K562 (cell line): ENCODE measurements at regions of chr6 and their contacts with region 1.

Region 1: GRCh38 chr6:149941583-149942431 is at the start of gene ULBP2:
- DNase-seq: peak; percentile 92 to 99 (median 99)
- ATAC-seq: peak; percentile 93
- H3K4me3 ChIP-seq: peak within 1 kb of the TSS; percentile 43
- H3K27ac ChIP-seq: no peak within 1 kb of the TSS
- H3K4me1 ChIP-seq: peaks cover 0 to 26% of the 10 kb centered on the region in 2 experiments; a peak in 2 of 5 replicates
- H3K27me3 ChIP-seq: peaks cover 14 to 51% of the 10 kb centered on the region in 2 experiments; a peak in 4 of 5 replicates
- CTCF ChIP-seq: no peak
- EP300 ChIP-seq: no peak
- POLR2A ChIP-seq: no peak
- RAD21 ChIP-seq: no peak
- polyA plus RNA-seq, gene ULBP2: 3.2 to 4.1 TPM

Region 2: GRCh38 chr6:150403458-150404246 is 461.8 kb after region 1 on chr6:
- CTCF ChIA-PET with region 1: no interaction called
- POLR2A ChIA-PET with region 1: no interaction called
- in situ Hi-C with region 1: loop called (anchors 10 kb)
- intact Hi-C with region 1: no loop called
- DNase-seq: no peak
- ATAC-seq: no peak
- H3K4me3 ChIP-seq: no peak overlapping the region
- H3K27ac ChIP-seq: no peak overlapping the region
- H3K4me1 ChIP-seq: peaks cover 0 to 3% of the 10 kb centered on the region in 2 experiments; a peak in 1 of 5 replicates
- H3K27me3 ChIP-seq: peaks cover 22 to 38% of the 10 kb centered on the region in 2 experiments
- CTCF ChIP-seq: no peak
- EP300 ChIP-seq: no peak
- POLR2A ChIP-seq: no peak
- RAD21 ChIP-seq: no peak